ENCODE measurements at regions of chr9 and their contacts with region 1.

Region 1: GRCh38 chr9:95004411-95005277 is 278.1 kb downstream of the AOPEP start:
- DNase-seq: peak; percentile 83
- H3K4me3 ChIP-seq: peak overlapping the region; percentile 64 to 87 (median 82)
- H3K27ac ChIP-seq: peak overlapping the region; percentile 97 to 99 (median 99)
- H3K4me1 ChIP-seq: peaks cover 0 to 49% (median 24%) of the 10 kb centered on the region in 4 donors
- H3K27me3 ChIP-seq: no peaks in the 10 kb centered on the region
- CTCF ChIP-seq: peak in 1 of 4 experiments; percentile 0
- EP300 ChIP-seq: no peak
- POLR2A ChIP-seq: no peak

Region 2: GRCh38 chr9:94912700-94913249 is 91.9 kb before region 1 on chr9:
- intact Hi-C with region 1: loop called (anchors 5 kb)
- DNase-seq: no peak
- H3K4me3 ChIP-seq: no peak overlapping the region
- H3K27ac ChIP-seq: peak overlapping the region in 2 of 4 donors; percentile 59 to 72
- H3K4me1 ChIP-seq: peaks cover 0 to 36% (median 25%) of the 10 kb centered on the region in 4 donors
- H3K27me3 ChIP-seq: no peaks in the 10 kb centered on the region
- CTCF ChIP-seq: no peak
- EP300 ChIP-seq: no peak
- POLR2A ChIP-seq: no peak

Region 3: DNA sequence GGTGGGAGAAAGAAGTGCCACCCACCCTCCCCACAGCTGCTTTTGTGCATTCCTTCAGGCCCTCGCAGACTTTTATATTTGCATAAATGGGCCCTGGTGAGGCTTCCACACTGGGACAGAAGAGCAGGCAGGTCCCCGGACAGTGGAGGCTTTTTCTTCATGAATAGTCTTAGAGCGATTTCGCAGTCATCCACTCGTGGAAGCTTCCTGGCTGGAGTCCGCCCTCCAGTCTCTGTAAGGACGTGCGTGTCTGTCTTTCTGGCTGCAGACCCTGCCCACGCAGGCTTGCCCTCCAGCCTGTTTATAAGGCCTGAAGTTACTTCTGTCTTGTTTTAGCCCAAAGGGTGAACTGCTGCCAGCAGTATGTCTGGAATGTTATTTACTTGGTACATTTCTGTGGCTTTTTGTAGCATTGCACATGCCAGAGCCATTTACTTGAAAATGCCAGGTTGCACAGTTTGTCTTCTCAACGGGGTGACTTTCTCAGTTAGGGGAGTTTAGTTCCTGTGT is 82.5 kb before region 1 on chr9:
- intact Hi-C with region 1: loop called (anchors 5 kb)
- DNase-seq: peak; percentile 76
- H3K4me3 ChIP-seq: peak overlapping the region in 1 of 4 donors; percentile 3
- H3K27ac ChIP-seq: peak overlapping the region; percentile 72 to 86 (median 82)
- H3K4me1 ChIP-seq: peaks cover 0 to 50% (median 46%) of the 10 kb centered on the region in 4 donors
- H3K27me3 ChIP-seq: no peaks in the 10 kb centered on the region
- CTCF ChIP-seq: no peak
- EP300 ChIP-seq: no peak
- POLR2A ChIP-seq: no peak

Region 4: DNA sequence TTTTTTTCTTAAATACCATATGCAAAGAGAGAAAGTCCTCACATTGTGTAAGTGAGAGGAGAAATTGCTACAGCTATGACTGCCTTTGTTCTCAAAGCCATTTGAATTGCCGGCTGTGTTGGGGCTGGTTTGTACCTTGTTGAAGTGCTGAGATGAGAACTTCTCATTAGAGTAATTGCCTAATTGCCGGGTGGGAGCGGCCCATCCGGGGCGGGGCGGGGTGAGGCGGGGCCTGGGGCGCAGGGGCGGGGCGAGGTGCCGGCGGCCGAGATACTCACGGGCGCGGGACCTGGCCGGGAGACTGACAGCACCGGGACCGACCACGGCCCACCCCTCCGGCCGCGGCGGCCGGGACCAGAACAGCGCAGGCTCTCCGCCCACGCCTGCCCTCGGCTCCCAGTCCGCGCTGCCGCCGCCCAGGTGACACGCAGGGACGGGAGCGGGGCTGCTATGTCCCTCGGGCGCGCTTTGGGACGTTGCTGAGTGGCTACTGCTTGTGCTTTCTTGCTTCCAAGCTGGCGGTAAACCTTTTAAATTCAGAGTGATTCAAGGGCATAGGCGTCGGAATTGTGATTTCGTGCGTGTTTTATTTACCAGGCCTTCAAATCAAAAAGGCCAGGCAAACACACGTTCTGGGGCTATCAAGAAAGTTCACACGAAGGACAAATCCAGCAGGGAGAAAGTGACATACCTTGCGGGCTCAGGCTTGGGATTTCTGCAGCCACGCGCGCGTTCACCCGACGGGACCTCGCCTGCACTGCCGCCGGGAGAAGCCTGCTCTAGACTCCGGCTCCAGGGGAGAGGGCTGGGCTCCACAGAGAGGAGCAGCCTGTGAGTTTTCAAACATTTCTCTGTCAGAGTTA is 43.8 kb after region 1 on chr9:
- intact Hi-C with region 1: loop called (anchors 5 kb)
- DNase-seq: no peak
- H3K4me3 ChIP-seq: peak overlapping the region; percentile 36 to 60 (median 59)
- H3K27ac ChIP-seq: peak overlapping the region; percentile 86 to 99 (median 88)
- H3K4me1 ChIP-seq: peaks cover 0 to 91% (median 73%) of the 10 kb centered on the region in 4 donors
- H3K27me3 ChIP-seq: no peaks in the 10 kb centered on the region
- CTCF ChIP-seq: no peak
- EP300 ChIP-seq: no peak
- POLR2A ChIP-seq: no peak

Region 5: GRCh38 chr9:95065224-95065623 is 60.6 kb after region 1 on chr9:
- intact Hi-C with region 1: loop called (anchors 5 kb)
- DNase-seq: peak; percentile 80
- H3K4me3 ChIP-seq: no peak overlapping the region
- H3K27ac ChIP-seq: peak overlapping the region; percentile 77 to 99 (median 85)
- H3K4me1 ChIP-seq: peaks cover 0 to 100% (median 99%) of the 10 kb centered on the region in 4 donors
- H3K27me3 ChIP-seq: no peaks in the 10 kb centered on the region
- CTCF ChIP-seq: no peak
- EP300 ChIP-seq: peak in 2 of 4 donors; percentile 7 to 69
- POLR2A ChIP-seq: no peak

Region 6: GRCh38 chr9:95127249-95128176 is 122.9 kb after region 1 on chr9:
- intact Hi-C with region 1: loop called (anchors 5 kb)
- DNase-seq: peak; percentile 94
- H3K4me3 ChIP-seq: peak overlapping the region; percentile 14 to 48 (median 34)
- H3K27ac ChIP-seq: peak overlapping the region in 3 of 4 donors; percentile 3 to 62 (median 5)
- H3K4me1 ChIP-seq: peaks cover 0 to 28% (median 10%) of the 10 kb centered on the region in 4 donors
- H3K27me3 ChIP-seq: no peaks in the 10 kb centered on the region
- CTCF ChIP-seq: peak; percentile 91 to 98 (median 96)
- EP300 ChIP-seq: no peak
- POLR2A ChIP-seq: no peak

Region 7: GRCh38 chr9:95383185-95383673 is 378.6 kb after region 1 on chr9:
- intact Hi-C with region 1: no loop called
- DNase-seq: no peak
- H3K4me3 ChIP-seq: no peak overlapping the region
- H3K27ac ChIP-seq: peak overlapping the region in 1 of 4 donors; percentile 21
- H3K4me1 ChIP-seq: peaks cover 0 to 9% (median 4%) of the 10 kb centered on the region in 4 donors
- H3K27me3 ChIP-seq: no peaks in the 10 kb centered on the region
- CTCF ChIP-seq: no peak
- EP300 ChIP-seq: no peak
- POLR2A ChIP-seq: no peak

Measured in sigmoid colon (tissue), 7 donors.